ENCODE measurements at regions of chr5 and their contacts with region 1.

Region 1: GRCh38 chr5:142221091-142221860 is 103.5 kb downstream of the SPRY4 start:
- DNase-seq: no peak
- ATAC-seq: no peak
- H3K4me3 Mint-ChIP-seq: no peak overlapping the region
- H3K27ac Mint-ChIP-seq: no peak overlapping the region
- H3K4me1 Mint-ChIP-seq: peaks cover 28% of the 10 kb centered on the region
- H3K27me3 Mint-ChIP-seq: peaks cover 16% of the 10 kb centered on the region
- CTCF ChIP-seq: no peak

Region 2: DNA sequence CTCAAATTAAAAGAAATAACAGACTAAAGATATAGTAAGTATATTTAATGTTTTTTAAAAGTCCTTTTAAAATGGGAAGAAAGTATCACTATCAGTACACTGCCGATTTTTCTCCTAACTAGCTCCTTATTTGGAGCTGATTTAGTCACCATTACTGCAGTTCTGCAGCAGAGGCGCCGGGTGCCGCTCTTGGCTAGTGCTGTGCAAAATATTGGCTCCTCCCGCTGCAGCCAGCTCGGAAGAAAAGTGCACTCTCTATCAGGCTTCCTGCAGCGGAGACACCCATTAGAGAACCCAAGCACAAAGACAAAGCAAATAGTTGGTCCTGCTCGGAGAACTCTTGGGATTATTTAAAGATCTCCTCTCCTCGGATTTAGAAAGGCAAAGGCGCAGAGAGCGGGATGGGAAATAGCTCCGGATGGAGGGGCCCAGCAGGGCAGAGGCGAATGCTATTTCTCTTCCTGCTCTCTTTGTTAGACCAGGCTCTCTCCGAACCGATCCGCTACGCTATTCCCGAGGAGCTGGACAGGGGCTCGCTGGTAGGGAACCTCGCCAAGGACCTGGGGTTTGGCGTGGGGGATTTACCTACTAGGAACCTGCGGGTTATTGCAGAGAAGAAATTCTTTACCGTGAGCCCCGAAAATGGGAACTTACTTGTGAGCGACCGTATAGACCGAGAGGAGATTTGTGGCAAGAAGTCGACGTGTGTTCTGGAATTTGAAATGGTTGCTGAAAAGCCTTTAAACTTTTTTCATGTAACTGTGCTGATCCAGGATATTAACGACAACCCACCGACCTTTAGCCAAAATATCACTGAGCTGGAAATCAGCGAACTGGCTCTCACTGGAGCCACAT is 851.1 kb before region 1 on chr5 and contains the start of gene PCDHGB3:
- CTCF ChIA-PET with region 1: no interaction called
- POLR2A ChIA-PET with region 1: no interaction called
- intact Hi-C with region 1: no loop called
- DNase-seq: no peak
- ATAC-seq: peak; percentile 64
- H3K4me3 Mint-ChIP-seq: peak within 1 kb of the TSS; percentile 81
- H3K27ac Mint-ChIP-seq: no peak within 1 kb of the TSS
- H3K4me1 Mint-ChIP-seq: peaks cover 7% of the 10 kb centered on the region
- H3K27me3 Mint-ChIP-seq: peaks cover 54% of the 10 kb centered on the region
- CTCF ChIP-seq: no peak
- total RNA-seq, gene PCDHGB3: 2.0 and 2.6 TPM in 2 replicates

Region 3: DNA sequence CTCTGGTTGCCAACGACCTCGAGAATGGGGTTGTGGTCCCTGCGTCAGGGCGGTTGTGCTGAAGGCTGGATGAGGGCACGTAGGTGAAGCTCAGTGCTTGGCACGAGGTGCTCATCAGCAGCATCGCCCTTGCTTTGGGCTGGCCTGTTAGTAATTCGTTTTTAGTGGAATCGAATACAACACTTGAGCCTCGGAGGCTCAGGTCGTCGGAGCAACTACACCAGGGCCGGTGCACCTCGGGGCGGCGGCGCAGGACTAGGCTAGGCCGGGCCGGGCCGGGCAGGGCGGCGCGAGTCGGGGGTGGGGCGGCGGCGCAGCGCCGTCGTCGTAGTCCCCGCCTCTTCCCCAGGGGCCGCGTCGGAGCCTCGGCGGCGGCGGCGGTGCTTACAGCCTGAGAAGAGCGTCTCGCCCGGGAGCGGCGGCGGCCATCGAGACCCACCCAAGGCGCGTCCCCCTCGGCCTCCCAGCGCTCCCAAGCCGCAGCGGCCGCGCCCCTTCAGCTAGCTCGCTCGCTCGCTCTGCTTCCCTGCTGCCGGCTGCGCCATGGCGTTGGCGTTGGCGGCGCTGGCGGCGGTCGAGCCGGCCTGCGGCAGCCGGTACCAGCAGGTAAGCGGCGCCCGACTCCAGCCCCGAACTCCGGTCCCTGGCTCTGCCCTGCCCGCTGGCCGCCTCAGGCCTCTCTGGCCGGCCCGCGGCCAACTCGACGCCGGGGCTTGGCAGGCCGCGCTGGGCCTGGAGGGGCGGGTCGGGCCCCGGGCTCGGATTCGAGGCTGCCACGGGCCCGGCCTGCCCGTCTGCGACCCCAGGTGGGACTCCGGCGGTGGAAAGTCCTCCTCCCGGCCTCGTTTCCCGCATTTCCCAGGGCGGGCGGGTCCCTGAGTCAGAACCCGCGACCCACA is 112.6 kb before region 1 on chr5 and contains the start of gene NDFIP1:
- CTCF ChIA-PET with region 1: no interaction called
- POLR2A ChIA-PET with region 1: no interaction called
- intact Hi-C with region 1: loop called (anchors 1 kb)
- DNase-seq: peak; percentile 84
- ATAC-seq: peak; percentile 97
- H3K4me3 Mint-ChIP-seq: peak within 1 kb of the TSS; percentile 84
- H3K27ac Mint-ChIP-seq: peak within 1 kb of the TSS; percentile 83
- H3K4me1 Mint-ChIP-seq: peaks cover 31% of the 10 kb centered on the region
- H3K27me3 Mint-ChIP-seq: no peaks in the 10 kb centered on the region
- CTCF ChIP-seq: no peak
- total RNA-seq, gene NDFIP1: 19.7 and 24.2 TPM in 2 replicates

Region 4: DNA sequence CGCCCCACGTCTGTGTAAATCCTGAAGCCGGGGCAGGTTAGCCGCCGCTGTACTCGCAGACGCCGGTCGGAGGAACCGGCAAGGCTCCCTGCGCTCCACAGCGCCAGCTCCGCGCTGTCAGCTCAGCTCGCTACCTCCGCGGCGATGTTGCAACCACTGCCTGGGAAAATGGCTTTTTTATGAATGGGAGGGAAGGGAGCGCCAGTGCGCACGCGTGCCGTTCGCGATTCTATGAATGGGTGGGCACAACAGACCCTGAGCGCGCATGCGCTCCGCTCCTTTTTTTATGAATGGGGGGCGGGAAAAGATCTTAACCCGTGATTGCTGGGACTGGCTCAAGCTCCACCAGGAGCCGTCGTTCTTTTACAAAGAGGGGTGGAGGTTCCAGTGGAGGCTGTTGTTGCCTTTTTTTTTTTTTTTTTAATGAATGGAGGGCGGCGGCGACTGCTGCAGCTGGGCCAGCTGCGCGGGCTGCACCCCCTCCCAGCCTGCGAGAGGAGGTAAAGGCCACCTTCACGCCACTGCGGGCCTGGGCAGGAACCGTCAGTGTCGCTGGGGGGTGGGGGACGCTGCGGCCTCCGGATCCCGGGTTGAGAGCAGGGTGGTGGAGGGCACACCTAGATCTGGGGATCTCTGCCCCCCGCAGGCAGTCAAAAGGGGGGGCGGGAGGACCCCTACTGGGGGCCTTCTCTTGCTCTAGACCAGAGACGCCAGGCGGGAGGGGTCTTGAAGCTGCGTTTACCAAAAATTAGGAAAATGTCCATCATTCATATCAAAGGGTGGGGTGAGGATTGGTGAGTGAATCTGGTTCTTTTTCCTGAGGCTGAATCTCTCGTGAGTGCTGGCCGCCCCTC is 103.8 kb after region 1 on chr5 and contains the start of gene SPRY4:
- CTCF ChIA-PET with region 1: no interaction called
- POLR2A ChIA-PET with region 1: no interaction called
- intact Hi-C with region 1: loop called (anchors 5 kb)
- DNase-seq: peak; percentile 70
- ATAC-seq: peak; percentile 77
- H3K4me3 Mint-ChIP-seq: peak within 1 kb of the TSS; percentile 85
- H3K27ac Mint-ChIP-seq: no peak within 1 kb of the TSS
- H3K4me1 Mint-ChIP-seq: peaks cover 41% of the 10 kb centered on the region
- H3K27me3 Mint-ChIP-seq: peaks cover 66% of the 10 kb centered on the region
- CTCF ChIP-seq: no peak
- total RNA-seq, gene SPRY4: not detected in 2 replicates

Region 5: GRCh38 chr5:142356716-142357473 is 135.6 kb after region 1 on chr5:
- CTCF ChIA-PET with region 1: no interaction called
- POLR2A ChIA-PET with region 1: interaction called, 3 read pairs
- intact Hi-C with region 1: loop called (anchors 2 kb)
- DNase-seq: peak; percentile 80
- ATAC-seq: peak; percentile 84
- H3K4me3 Mint-ChIP-seq: peak overlapping the region; percentile 83
- H3K27ac Mint-ChIP-seq: peak overlapping the region; percentile 79
- H3K4me1 Mint-ChIP-seq: peaks cover 40% of the 10 kb centered on the region
- H3K27me3 Mint-ChIP-seq: peaks cover 5% of the 10 kb centered on the region
- CTCF ChIP-seq: no peak

Region 6: DNA sequence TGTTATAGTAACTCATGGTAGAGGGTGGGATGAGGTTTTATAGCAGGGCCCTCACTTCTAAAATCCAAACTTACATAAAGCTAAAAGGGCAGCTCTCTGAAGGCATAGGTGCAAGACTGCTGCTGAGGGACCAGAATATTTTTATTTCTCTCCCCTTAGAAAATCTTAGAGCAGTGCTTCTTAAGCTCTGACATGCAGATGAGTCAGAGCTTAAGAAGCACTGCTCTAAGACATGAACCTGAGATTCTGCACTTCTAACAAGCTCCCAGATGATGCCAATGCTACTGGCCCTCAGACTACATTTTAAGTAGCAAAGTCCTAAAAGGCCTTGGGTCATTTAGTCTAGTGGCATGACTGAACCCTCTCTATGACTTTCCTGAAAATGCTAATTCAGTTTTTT is 201.2 kb after region 1 on chr5:
- CTCF ChIA-PET with region 1: no interaction called
- POLR2A ChIA-PET with region 1: no interaction called
- intact Hi-C with region 1: loop called (anchors 2 kb)
- DNase-seq: no peak
- ATAC-seq: no peak
- H3K4me3 Mint-ChIP-seq: no peak overlapping the region
- H3K27ac Mint-ChIP-seq: no peak overlapping the region
- H3K4me1 Mint-ChIP-seq: peaks cover 55% of the 10 kb centered on the region
- H3K27me3 Mint-ChIP-seq: peaks cover 3% of the 10 kb centered on the region
- CTCF ChIP-seq: no peak

Region 7: DNA sequence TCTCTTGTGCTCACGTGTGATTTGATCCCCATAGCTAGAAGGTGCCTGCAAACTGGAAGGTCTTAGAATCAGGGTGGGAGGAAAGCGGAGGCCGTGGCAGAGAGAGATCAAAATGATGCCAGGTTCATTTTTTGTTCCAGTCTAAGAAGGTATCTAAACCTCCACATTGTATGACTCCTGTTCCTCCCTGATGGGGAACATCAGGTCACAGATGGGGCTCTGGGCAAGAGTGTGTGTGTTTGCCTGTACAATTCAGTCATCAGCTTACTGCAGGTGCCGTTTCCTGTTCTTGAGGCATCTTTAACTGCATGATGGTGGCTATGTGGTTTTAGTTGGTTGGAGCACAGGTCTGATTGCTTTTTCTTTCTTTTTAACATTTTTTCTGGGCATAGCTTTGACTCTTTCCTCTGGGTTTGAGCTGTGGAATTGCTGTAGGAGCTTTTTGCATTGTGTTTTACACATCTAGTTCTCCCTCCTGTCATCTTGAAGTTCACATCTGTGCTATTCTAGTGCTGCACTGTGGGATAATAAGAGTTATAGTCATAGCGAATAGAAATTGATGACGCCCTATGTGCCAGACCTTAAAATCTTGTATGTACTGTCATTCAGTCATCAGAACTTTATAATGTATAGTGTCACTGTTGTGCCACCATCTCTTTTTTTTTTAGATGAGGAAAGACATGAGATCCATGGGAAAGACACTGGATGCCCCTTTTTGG is 579.7 kb after region 1 on chr5:
- CTCF ChIA-PET with region 1: no interaction called
- POLR2A ChIA-PET with region 1: no interaction called
- intact Hi-C with region 1: loop called (anchors 10 kb)
- DNase-seq: no peak
- ATAC-seq: peak; percentile 78
- H3K4me3 Mint-ChIP-seq: peak overlapping the region; percentile 64
- H3K27ac Mint-ChIP-seq: peak overlapping the region; percentile 84
- H3K4me1 Mint-ChIP-seq: peaks cover 63% of the 10 kb centered on the region
- H3K27me3 Mint-ChIP-seq: no peaks in the 10 kb centered on the region
- CTCF ChIP-seq: no peak

Region 8: GRCh38 chr5:144170276-144171024 is 1949.2 kb after region 1 on chr5 and contains the starts of genes KCTD16 and YIPF5:
- CTCF ChIA-PET with region 1: no interaction called
- POLR2A ChIA-PET with region 1: no interaction called
- intact Hi-C with region 1: loop called (anchors 10 kb)
- DNase-seq: peak; percentile 91
- ATAC-seq: peak; percentile 98
- H3K4me3 Mint-ChIP-seq: peak within 1 kb of the TSS; percentile 90
- H3K27ac Mint-ChIP-seq: peak within 1 kb of the TSS; percentile 90
- H3K4me1 Mint-ChIP-seq: peaks cover 29% of the 10 kb centered on the region
- H3K27me3 Mint-ChIP-seq: peaks cover 3% of the 10 kb centered on the region
- CTCF ChIP-seq: no peak
- total RNA-seq, gene KCTD16: not detected in 2 replicates
- total RNA-seq, gene YIPF5: 28.0 and 29.4 TPM in 2 replicates

Measured in activated B cell treated with CpG ODN at 0.5 μM for 24 hours (primary cell).